ENCODE measurements at regions of chr3 and their contacts with region 1.

Region 1: DNA sequence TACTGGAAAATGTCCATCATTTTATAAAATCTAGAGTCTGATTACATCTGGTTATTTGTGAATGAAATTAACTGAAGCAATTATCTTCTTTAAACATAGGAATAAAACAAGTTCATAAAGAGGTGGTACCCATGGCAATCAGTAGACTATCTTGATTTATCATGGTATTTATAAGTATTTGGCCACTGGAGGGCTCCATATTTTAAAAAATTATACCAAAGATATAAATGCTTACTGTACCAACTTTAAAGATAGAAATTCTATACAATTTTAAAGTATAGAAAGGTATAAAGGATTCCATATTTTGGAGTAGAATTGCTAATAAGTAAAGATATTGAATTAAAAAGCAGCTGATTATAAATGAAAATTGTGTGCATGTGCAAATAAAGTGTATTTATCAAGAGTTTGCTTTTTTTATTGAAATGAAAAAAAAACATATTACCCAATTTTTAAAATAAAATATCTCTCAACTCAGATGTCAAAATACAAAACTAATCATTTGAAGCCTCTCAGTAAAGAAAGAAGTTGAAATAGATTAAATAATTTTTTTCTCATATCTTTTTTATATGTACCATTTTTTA is 105.3 kb downstream of the BBX start:
- DNase-seq: no peak
- CTCF ChIP-seq: no peak

Region 2: GRCh38 chr3:107588227-107588626 is 39.8 kb before region 1 on chr3:
- CTCF ChIA-PET with region 1: no interaction called
- POLR2A ChIA-PET with region 1: no interaction called
- DNase-seq: no peak
- CTCF ChIP-seq: no peak

Region 3: DNA sequence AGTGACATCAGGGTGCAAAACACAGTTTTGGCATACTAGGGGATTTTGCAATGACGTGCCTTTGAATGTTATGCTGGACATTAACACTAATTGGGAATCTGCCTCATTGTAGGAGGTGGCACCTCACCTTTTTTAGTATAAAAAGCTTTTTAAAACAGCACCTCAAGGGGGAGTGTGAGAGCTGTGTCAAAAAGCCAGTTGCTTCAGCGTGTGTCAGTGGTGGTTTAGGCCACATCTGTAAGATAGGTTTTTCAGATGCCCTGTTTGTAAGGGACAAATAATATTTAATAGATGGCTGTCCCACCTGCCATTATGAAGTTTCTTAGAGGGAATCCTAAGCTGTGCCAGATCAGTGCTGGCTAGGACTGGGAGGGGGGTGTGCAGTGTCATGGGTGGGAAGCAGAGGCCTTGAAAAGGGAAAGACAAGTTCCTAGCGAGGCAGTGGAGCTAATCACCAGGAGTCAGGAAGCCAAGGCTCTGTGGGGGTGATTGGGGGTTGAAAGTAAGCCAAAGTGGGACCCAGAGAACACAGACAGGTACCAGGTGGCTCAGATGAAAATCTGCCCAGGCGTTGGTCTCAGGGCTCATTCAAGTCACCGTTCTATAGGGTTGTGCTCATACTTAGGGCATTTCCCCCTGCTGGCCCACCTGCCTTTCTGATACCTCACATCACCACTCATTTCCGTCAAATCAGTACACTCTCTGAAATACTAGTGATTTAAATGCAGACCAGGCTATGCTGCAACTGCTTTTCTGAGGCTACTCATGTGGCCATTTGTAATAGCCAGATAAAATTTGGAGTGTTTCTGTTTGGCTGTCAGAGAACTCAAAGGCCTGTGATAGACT is 15.2 kb after region 1 on chr3:
- CTCF ChIA-PET with region 1: interaction called, 19 read pairs
- POLR2A ChIA-PET with region 1: no interaction called
- DNase-seq: no peak
- CTCF ChIP-seq: no peak